ENCODE measurements at regions of chr6 and their contacts with region 1.

Region 1: GRCh38 chr6:38570750-38571149 is 69.0 kb downstream of the BTBD9 start:
- DNase-seq: no peak
- ATAC-seq: no peak
- H3K4me3 Mint-ChIP-seq: no peak overlapping the region
- H3K27ac Mint-ChIP-seq: no peak overlapping the region
- H3K4me1 Mint-ChIP-seq: peaks cover 23% of the 10 kb centered on the region
- H3K27me3 Mint-ChIP-seq: no peaks in the 10 kb centered on the region

Region 2: GRCh38 chr6:37698261-37699137 is 872.3 kb before region 1 on chr6:
- CTCF ChIA-PET with region 1: no interaction called
- POLR2A ChIA-PET with region 1: no interaction called
- intact Hi-C with region 1: loop called in 1 of 2 experiments (anchors 2 kb)
- DNase-seq: peak; percentile 61
- ATAC-seq: peak; percentile 22
- H3K4me3 Mint-ChIP-seq: peak overlapping the region; percentile 77
- H3K27ac Mint-ChIP-seq: no peak overlapping the region
- H3K4me1 Mint-ChIP-seq: peaks cover 21% of the 10 kb centered on the region
- H3K27me3 Mint-ChIP-seq: peaks cover 47% of the 10 kb centered on the region

Region 3: DNA sequence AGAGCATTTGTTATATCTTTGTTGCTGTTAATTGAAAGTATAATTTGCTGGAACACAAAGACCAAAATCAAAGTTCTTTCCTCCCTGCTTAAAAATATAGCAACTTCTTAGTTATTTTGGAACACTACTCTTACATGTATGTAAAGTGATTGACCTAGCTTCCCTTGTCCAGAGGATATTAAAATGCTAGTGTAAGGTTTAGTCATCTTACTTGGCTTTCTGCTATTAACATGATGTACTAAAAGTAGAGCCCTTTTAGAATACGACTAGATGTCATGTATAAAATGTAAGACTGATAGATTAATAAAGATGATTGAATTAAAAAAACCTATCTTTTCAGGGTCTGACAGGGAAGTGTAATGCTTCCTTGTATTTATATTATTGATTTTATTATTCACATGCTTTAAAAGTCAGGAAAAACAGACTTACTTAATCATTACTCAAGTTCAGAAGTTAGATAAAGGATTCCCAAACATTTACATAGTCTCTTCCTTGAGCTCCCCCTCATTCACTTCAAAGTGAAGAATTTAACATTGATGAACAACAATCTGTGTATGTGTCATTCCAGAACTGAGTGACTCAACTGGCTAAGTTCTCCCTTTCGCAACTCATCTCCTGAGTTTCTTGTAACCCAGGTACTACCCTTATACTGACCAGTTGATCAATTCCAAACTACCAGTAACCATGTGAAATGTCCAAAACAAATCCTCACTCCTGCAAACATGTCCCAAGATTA is 18.0 kb after region 1 on chr6:
- CTCF ChIA-PET with region 1: interaction called, 9 read pairs
- POLR2A ChIA-PET with region 1: no interaction called
- intact Hi-C with region 1: loop called in 1 of 2 experiments (anchors 2 kb)
- DNase-seq: no peak
- ATAC-seq: peak; percentile 70
- H3K4me3 Mint-ChIP-seq: no peak overlapping the region
- H3K27ac Mint-ChIP-seq: no peak overlapping the region
- H3K4me1 Mint-ChIP-seq: peaks cover 22% of the 10 kb centered on the region
- H3K27me3 Mint-ChIP-seq: no peaks in the 10 kb centered on the region

Region 4: DNA sequence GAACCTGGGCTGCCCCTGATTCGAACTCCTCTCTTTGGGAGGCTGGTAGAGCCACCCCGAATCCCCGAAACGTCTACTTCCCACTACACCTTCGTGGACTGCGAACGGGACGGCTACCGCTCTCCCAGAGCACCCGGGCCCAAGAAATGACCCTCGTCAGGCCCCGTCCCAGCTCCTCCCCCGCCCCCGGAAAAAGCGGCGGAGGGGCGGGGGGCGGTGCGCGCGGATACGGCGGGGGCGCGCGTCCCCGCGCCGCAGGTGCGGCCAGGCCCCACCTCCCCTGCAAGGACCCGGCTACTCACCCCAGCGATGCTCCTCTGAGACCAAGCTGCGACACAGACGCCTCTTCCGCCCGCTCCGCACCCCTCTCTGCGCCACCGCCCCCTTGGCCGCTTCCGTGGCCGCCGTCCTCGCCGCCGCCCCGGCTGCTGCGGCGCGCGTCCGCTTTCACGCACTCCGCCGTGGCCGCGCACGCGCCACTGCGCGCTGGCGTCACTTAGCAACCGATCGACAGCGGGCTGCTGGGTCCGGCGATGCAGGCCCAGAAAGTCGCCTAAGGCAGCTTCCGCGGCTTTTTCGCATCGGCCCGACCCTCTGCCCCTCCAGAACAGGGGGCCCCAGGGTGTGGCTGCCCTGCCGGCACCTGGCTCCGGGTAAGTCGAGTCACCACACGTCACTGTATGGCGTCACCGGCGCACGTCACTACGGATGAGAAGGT is 68.9 kb after region 1 on chr6 and contains the start of gene BTBD9:
- CTCF ChIA-PET with region 1: interaction called, 3 read pairs
- POLR2A ChIA-PET with region 1: interaction called, 3 read pairs
- intact Hi-C with region 1: loop called (anchors 1 to 5 kb)
- DNase-seq: peak; percentile 89
- ATAC-seq: peak; percentile 71
- H3K4me3 Mint-ChIP-seq: peak within 1 kb of the TSS; percentile 82
- H3K27ac Mint-ChIP-seq: peak within 1 kb of the TSS; percentile 82
- H3K4me1 Mint-ChIP-seq: peaks cover 40% of the 10 kb centered on the region
- H3K27me3 Mint-ChIP-seq: no peaks in the 10 kb centered on the region
- total RNA-seq, gene BTBD9: 8.2 to 12.2 TPM

Region 5: DNA sequence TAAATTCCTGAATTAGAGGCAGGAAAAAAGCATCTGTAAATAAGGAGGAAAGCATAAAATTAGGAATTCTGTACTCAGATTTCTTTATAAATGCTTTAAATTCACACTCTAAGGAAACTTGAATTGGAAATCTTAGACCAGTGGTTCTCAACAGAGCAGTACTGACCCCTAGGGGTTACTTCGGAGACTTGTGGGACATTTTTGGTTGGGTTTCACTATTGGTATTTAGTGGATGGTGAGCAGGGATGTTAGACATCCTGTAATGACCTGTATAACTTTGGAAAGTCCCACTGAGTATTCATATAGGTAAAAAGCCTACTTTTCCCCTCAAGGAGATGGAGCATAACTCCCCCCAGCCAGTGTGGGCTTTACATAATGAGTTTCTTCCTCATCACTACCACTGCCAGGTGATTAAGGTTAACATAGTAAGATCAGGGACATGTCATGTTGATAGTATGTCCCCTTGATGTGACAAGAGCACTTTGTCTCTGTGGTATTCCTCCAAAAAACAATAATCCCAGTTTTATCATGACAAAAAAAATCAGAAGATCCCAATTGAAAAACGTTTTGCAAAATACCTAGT is 101.2 kb after region 1 on chr6:
- CTCF ChIA-PET with region 1: interaction called, 3 read pairs
- POLR2A ChIA-PET with region 1: no interaction called
- intact Hi-C with region 1: loop called in 1 of 2 experiments (anchors 10 kb)
- DNase-seq: peak; percentile 41
- ATAC-seq: peak; percentile 90
- H3K4me3 Mint-ChIP-seq: no peak overlapping the region
- H3K27ac Mint-ChIP-seq: no peak overlapping the region
- H3K4me1 Mint-ChIP-seq: peaks cover 27% of the 10 kb centered on the region
- H3K27me3 Mint-ChIP-seq: no peaks in the 10 kb centered on the region

Region 6: GRCh38 chr6:39029156-39030011 is 458.6 kb after region 1 on chr6:
- CTCF ChIA-PET with region 1: no interaction called
- POLR2A ChIA-PET with region 1: no interaction called
- intact Hi-C with region 1: no loop called
- DNase-seq: peak; percentile 80
- ATAC-seq: peak; percentile 92
- H3K4me3 Mint-ChIP-seq: no peak overlapping the region
- H3K27ac Mint-ChIP-seq: no peak overlapping the region
- H3K4me1 Mint-ChIP-seq: no peaks in the 10 kb centered on the region
- H3K27me3 Mint-ChIP-seq: peaks cover 32% of the 10 kb centered on the region

Region 7: DNA sequence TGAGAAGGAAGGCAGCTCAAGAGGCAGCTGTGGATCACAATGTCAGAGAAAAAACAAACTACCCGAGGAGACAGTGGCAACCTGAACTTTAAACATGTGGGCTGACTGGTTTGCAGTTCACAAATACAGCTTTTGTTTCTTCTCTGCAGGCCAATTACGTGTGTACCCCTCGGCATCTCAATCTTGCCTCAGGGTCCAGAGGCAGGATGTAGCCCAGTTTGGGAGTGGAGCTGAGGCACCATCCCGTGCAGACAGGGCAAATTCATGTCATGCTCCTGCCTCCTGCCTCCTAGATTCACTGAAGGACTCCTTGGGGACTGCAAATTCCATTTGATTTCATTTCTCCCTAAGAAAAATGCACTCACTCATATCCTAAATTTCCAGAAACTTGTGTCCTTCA is 846.0 kb after region 1 on chr6:
- CTCF ChIA-PET with region 1: no interaction called
- POLR2A ChIA-PET with region 1: no interaction called
- intact Hi-C with region 1: loop called in 1 of 2 experiments (anchors 10 kb)
- DNase-seq: no peak
- ATAC-seq: no peak
- H3K4me3 Mint-ChIP-seq: no peak overlapping the region
- H3K27ac Mint-ChIP-seq: no peak overlapping the region
- H3K4me1 Mint-ChIP-seq: no peaks in the 10 kb centered on the region
- H3K27me3 Mint-ChIP-seq: no peaks in the 10 kb centered on the region